ENCODE measurements at regions of chr6 and their contacts with region 1.

Region 1: GRCh38 chr6:108039681-108040080 is 34.9 kb downstream of the OSTM1 start:
- DNase-seq: no peak
- H3K4me3 ChIP-seq: no peak overlapping the region
- H3K27me3 ChIP-seq: no peaks in the 10 kb centered on the region
- CTCF ChIP-seq: no peak

Region 2: DNA sequence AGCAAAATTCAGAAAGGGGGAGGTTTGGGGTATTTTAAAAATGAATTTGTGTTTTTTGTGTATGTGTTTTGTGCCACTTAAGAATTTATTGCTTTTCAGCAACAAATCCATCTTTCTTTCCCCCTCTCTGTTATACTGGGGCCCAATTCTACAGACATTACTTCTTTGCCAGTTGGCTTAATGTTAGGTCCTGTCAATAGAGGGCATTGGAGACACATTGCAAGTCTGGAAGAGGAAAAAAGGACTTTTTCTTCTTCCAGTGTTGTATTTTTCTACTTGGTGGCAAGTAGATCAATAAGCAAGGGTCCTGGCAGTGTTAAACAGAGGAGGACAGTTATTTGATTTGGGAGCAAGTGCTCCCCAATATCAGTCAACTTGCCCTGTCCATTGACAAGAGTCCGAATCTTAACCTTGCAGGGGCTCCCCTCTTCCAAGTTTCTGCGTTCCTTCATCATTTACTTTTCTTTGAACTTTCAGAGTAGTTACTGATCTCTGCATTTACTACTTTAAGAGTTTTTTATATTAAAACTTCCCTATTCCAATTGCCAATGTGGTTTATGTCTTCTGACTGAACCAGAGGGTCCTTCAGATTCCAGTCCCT is 239.0 kb before region 1 on chr6:
- CTCF ChIA-PET with region 1: no interaction called
- POLR2A ChIA-PET with region 1: no interaction called
- DNase-seq: no peak
- H3K4me3 ChIP-seq: no peak overlapping the region
- H3K27me3 ChIP-seq: no peaks in the 10 kb centered on the region; the same call in 1 of the 2 replicates
- CTCF ChIP-seq: no peak

Region 3: GRCh38 chr6:107982486-107982885 is 57.2 kb before region 1 on chr6:
- CTCF ChIA-PET with region 1: interaction called, 52 read pairs
- POLR2A ChIA-PET with region 1: no interaction called
- DNase-seq: no peak
- H3K4me3 ChIP-seq: no peak overlapping the region
- H3K27me3 ChIP-seq: no peaks in the 10 kb centered on the region
- CTCF ChIP-seq: no peak

Region 4: DNA sequence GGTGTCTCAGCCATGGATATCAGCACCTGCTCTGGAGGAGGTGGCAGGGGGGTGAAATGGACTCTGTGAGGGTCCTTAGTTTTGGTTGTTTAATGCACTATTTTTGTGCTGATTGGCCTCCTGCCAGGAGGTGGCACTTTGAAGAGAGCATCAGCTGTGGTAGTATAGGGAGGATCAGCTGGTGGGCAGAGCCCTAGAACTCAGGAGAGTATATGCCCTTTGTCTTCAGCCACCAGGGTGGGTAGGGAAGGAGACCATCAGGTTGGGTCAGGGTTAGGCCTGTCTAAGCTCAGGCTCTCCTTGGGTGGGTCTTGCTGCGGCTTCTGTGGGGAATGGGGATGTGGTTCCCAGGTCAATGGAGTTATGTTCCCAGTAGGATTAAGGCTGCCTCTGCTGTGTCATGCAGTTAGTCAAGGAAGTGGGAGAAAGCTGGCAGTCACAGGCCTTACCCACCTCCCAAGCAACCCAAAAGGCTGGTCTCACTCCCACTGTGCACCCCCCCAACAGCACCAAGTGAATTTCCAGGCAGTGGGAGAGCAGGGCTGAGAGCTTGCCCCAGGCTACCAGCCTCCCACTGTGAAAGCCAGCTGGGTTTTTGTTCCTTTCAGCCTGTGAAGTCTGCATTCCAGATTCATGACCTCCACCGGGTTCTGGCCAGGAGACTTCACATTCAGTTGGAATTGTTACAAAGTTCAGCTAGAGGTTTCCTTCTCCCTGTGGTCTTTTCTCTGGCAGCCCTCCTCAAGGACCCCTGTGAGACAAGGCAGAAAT is 40.5 kb after region 1 on chr6:
- CTCF ChIA-PET with region 1: no interaction called
- POLR2A ChIA-PET with region 1: no interaction called
- DNase-seq: no peak
- H3K4me3 ChIP-seq: no peak overlapping the region
- H3K27me3 ChIP-seq: peaks cover 1% of the 10 kb centered on the region; the same call in 1 of the 2 replicates
- CTCF ChIP-seq: no peak

Measured in BJ (cell line).